G401 (cell line): ENCODE measurements at regions of chr3 and their contacts with region 1.

Region 1: GRCh38 chr3:839981-840380 is 252.8 kb upstream of the CNTN6 start:
- DNase-seq: no peak

Region 2: GRCh38 chr3:882533-882932 is 42.6 kb after region 1 on chr3:
- in situ Hi-C with region 1: no loop called
- DNase-seq: no peak

Region 3: DNA sequence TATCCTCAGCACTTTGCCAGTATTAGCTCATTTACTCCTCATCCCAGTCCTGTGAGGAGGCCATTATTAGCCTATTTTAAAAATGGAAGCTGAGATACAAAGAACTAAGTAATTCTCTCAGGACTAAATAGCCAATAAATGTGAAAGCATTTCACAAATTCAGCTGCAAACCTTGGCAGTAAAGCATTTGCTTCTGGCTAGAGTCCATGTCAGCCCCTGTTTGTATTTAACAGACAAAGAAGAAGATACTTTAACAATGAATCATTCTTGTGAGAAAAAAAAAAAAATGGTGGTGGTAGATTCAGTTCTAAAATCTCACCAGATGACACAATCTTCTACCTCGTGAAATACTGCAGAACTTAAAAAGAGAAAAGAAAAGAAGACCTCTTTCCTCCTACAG is 167.9 kb after region 1 on chr3:
- in situ Hi-C with region 1: no loop called
- DNase-seq: no peak

Region 4: GRCh38 chr3:1092771-1093170 is 252.8 kb after region 1 on chr3 and contains the start of gene CNTN6:
- in situ Hi-C with region 1: loop called (anchors 5 kb)
- DNase-seq: peak; percentile 86
- total RNA-seq, gene CNTN6: not detected in 2 replicates